Sigmoid colon (tissue), 7 donors: ENCODE measurements at regions of chr4 and their contacts with region 1.

Region 1: GRCh38 chr4:139651282-139652194 is 14.1 kb upstream of the MGST2 start:
- DNase-seq: peak; percentile 91
- H3K4me3 ChIP-seq: peak overlapping the region in 2 of 4 donors; percentile 20 to 26
- H3K27ac ChIP-seq: no peak overlapping the region
- H3K4me1 ChIP-seq: peaks cover 0 to 5% (median 2%) of the 10 kb centered on the region in 4 donors
- H3K27me3 ChIP-seq: no peaks in the 10 kb centered on the region
- CTCF ChIP-seq: peak; percentile 79 to 94 (median 84)
- EP300 ChIP-seq: no peak
- POLR2A ChIP-seq: no peak

Region 2: GRCh38 chr4:139501927-139502899 is 149.3 kb before region 1 on chr4:
- intact Hi-C with region 1: loop called (anchors 5 kb)
- DNase-seq: no peak
- H3K4me3 ChIP-seq: no peak overlapping the region
- H3K27ac ChIP-seq: no peak overlapping the region
- H3K4me1 ChIP-seq: peaks cover 0 to 5% (median 4%) of the 10 kb centered on the region in 4 donors
- H3K27me3 ChIP-seq: no peaks in the 10 kb centered on the region
- CTCF ChIP-seq: no peak
- EP300 ChIP-seq: no peak
- POLR2A ChIP-seq: no peak

Region 3: DNA sequence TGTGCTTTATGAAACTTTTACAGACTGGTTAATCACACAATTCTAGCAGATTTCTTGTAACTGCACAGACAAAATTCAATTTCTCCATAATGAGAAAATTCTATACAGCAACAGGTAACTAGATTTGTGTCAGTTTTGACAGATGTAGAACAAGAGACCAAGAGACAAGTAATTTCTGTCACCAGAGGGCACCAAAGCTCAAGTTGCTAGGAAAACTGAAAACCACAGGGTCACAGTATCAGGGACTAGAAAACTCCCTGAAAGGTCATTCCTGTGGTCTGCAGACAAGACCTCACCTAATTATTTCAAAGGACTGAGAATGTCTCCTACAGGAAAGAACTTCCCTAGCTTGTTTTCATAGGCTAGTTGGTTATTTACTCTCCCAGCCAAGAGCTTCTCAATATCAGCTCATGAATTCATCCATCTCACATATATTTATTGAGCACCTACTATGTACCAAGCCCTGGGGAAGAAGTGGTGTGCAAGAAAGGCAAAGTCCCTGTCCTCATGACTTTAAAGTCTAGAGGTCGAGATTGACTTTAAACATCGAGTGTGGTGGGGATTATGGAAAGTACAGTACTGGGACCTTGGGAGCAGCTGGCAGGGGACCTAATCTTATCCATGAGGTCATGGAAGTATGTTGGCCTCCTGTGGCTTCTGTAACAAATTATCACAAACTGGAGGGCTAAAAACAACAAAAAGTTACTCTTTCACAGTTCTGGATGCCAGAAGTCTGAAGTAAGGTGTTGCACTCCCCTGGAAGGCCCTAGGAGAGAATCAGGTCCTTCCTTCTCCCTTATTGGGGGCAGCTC is 47.8 kb before region 1 on chr4:
- intact Hi-C with region 1: loop called (anchors 5 kb)
- DNase-seq: no peak
- H3K4me3 ChIP-seq: no peak overlapping the region
- H3K27ac ChIP-seq: no peak overlapping the region
- H3K4me1 ChIP-seq: no peaks in the 10 kb centered on the region
- H3K27me3 ChIP-seq: no peaks in the 10 kb centered on the region
- CTCF ChIP-seq: peak in 3 of 4 experiments; percentile 44 to 67 (median 56)
- EP300 ChIP-seq: no peak
- POLR2A ChIP-seq: no peak

Region 4: DNA sequence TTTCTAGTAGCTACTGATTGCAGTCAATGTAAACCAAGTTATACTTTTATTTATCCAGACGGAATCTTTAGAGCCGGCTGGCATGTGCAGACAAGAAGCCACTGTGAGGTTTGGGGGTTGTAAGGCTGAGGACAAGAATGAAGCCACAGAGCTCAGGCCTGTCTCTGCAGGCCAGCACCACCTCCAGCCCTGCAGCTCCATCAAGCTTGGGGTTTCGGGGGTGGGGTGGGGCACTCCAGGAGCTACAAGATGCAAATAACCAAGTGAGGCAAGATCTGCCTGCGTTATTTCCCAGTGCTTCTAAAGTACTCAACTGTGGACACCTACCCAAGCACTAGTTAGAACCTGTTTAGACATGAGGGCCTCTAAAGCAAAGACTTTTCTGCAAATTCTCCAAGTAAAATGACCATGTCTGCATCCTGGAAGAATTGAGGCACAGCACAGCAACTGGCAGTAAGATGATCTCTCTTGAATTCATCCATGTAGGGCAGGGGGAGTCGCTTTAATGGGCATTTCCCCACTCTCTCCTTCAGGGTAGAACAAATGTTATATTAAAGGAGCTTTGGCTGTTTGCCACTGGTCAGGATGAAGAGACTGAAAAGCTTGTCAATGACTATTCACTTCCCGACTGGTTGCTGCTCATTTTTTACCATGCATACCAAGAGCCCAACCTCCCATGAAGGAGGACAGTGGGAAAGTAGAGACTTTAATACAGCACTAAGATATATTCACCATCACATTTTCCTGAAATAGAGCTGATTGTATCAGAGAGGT is 236.6 kb after region 1 on chr4:
- intact Hi-C with region 1: no loop called
- DNase-seq: no peak
- H3K4me3 ChIP-seq: no peak overlapping the region
- H3K27ac ChIP-seq: peak overlapping the region; percentile 8 to 59 (median 37)
- H3K4me1 ChIP-seq: peaks cover 0 to 23% (median 18%) of the 10 kb centered on the region in 4 donors
- H3K27me3 ChIP-seq: no peaks in the 10 kb centered on the region
- CTCF ChIP-seq: no peak
- EP300 ChIP-seq: no peak
- POLR2A ChIP-seq: no peak